Activated CD4-positive, alpha-beta T cell treated with anti-CD3 and anti-CD28 coated beads for 36 hours (primary cell): ENCODE measurements at regions of chr10 and their contacts with region 1.

Region 1: DNA sequence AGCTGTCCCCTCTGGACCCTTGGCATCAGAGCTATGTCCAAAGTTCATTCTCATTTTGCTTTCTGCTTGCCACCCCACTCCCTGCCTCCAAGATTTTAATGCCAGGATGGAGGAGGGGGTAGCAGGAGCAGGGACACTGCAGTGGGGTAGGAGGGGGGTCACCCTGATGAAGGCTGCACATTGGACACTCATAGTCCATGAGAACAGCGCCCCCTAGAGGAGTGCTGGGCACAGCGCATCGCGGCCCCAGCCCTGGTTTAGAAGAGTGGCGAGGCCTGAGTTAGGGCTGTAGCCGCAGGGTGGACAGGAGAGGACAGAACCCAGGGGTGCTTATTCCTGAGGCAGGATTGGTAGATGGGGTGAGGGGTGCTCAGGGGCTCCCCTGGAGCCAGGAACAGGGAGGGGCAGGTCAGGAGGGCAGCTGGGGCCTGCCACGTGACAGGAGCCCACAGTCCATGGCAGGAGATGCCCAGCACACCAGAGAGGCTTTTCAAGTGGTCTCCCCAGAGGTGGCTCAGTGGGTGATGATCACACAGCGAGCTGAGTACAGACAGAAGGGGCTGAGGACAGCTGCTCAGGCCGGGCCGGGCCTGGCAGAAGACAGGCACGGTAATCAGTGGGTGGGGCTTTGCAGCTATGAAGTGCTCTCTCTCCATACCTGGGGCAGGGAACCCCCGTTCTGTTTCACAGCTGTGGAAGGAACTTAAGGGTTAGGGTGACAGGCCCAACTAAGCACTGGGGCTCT is 71.4 kb downstream of the NEURL1 start:
- DNase-seq: peak; percentile 79
- ATAC-seq: peak; percentile 88
- H3K4me3 Mint-ChIP-seq: no peak overlapping the region
- H3K27ac Mint-ChIP-seq: no peak overlapping the region
- H3K4me1 Mint-ChIP-seq: no peaks in the 10 kb centered on the region
- H3K27me3 Mint-ChIP-seq: peaks cover 2% of the 10 kb centered on the region

Region 2: DNA sequence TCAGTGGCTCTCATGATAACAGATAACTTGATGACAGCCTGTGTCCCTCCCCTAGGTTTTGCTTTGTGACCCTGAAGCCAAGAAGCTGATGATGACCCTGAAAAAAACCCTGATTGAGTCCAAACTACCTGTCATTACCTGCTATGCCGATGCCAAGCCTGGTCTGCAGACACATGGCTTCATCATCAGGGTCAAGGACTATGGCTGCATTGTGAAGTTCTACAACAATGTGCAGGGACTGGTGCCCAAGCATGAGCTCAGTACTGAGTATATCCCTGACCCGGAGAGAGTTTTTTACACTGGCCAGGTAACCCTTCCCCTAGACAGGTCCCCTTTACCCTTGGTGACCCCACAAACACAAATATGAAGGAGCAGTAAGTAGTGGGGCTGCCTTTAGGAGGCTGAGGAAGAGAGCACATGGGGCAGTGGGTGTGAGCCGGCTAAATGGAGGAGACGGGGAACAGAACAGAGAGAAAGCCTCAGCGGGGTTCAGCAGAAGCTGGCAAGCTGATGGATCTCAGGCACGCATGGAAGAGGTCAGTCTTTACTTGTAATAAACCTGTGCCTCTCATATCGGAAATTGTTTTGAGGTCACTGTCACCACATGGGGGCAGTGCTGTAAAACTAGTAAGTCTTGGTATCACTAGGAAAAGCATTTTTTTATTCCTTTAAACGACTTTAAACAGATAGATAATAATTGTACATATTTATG is 148.4 kb before region 1 on chr10:
- CTCF ChIA-PET with region 1: interaction called, 3 read pairs
- POLR2A ChIA-PET with region 1: no interaction called
- intact Hi-C with region 1: loop called in 1 of 2 experiments (anchors 5 kb)
- DNase-seq: peak; percentile 70
- ATAC-seq: peak; percentile 55
- H3K4me3 Mint-ChIP-seq: no peak overlapping the region
- H3K27ac Mint-ChIP-seq: no peak overlapping the region
- H3K4me1 Mint-ChIP-seq: no peaks in the 10 kb centered on the region
- H3K27me3 Mint-ChIP-seq: no peaks in the 10 kb centered on the region

Region 3: GRCh38 chr10:103547391-103547946 is 17.5 kb before region 1 on chr10:
- CTCF ChIA-PET with region 1: interaction called, 18 read pairs
- POLR2A ChIA-PET with region 1: no interaction called
- intact Hi-C with region 1: no loop called
- DNase-seq: no peak
- ATAC-seq: no peak
- H3K4me3 Mint-ChIP-seq: no peak overlapping the region
- H3K27ac Mint-ChIP-seq: no peak overlapping the region
- H3K4me1 Mint-ChIP-seq: peaks cover 9% of the 10 kb centered on the region
- H3K27me3 Mint-ChIP-seq: peaks cover 3% of the 10 kb centered on the region

Region 4: DNA sequence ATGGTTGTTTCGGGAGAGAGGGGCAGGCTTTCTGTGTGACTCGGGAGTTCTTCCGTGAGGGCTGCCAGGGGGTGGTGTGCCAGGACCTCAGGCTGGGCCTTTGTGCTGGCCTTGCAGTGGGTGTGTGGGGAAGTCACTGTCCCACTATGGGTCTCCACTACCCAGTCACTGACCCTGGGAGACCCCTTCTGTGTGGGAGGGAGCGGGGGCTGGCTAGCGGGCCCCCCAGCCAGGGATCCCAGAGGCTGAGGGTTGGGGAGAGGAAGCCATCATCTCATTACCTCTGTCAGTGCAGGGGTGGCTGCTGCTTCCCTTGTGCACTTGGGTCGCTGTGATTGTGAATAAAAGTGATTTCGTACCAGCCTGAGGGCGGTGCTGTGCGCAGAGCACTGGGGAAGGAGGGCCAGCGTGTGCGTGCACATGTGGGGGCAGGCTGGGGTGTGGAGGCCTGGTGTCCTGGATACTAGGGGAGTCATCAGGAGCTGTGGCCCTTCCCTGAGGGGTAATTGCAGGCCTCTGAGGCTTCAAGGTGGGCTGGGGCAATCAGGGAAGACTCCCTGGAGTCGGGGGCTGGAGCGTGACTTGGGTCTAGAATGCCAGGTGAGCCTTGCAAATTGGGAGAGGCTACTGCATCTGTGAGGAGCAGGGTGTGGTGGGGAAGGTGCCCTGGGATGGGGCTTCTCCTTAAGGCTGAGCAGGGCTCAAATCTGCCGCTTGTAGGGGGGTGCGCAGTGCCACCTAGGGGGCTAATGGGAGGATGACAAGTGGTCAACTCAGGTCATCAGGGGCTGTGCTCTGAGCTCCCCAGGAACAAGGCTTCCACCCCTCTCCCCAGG is 27.5 kb after region 1 on chr10:
- CTCF ChIA-PET with region 1: interaction called, 3 read pairs
- POLR2A ChIA-PET with region 1: interaction called, 13 read pairs
- intact Hi-C with region 1: no loop called
- DNase-seq: peak; percentile 72
- ATAC-seq: peak; percentile 90
- H3K4me3 Mint-ChIP-seq: no peak overlapping the region
- H3K27ac Mint-ChIP-seq: no peak overlapping the region
- H3K4me1 Mint-ChIP-seq: peaks cover 3% of the 10 kb centered on the region
- H3K27me3 Mint-ChIP-seq: no peaks in the 10 kb centered on the region

Region 5: DNA sequence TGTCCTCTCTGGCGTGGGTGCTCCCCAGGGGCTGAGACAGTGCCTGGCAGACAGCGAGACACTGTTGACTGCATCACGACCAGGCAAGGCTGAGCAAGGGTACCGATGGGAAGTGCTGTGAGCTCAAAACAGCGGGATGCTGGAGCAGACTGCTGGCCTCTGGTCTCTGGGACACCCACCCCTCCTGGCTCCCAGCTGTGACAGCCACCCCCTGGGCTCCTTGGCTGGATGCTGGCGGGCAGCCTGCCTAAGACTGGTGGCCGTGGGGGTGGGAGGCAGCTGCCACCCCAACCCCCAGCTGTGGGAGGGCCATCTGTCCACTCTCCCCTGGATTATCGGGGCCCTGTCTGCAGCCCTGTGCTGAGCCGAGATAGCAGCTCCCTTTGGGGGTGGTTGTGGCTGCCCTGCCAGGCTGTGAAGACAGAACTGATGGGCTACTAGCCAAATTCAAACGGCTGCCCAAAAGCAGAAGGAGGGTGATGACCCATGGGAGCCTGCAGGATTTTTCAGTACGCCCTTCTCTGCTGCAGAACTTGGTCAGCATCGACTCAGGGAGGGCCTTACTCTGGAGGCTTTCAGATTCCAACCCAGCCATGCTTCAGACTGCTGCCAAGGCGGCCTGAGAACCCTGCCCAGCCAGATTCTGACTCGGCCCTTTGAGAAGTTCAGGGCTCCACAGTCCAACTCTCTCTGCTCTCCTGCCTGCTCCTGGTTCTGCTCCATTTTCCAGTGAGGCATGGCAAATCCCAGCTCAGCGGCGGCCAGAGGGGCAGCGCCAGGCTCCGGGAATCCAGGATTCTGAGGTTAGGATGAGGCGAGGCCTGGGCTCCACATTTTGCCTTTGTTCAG is 53.9 kb after region 1 on chr10:
- CTCF ChIA-PET with region 1: no interaction called
- POLR2A ChIA-PET with region 1: no interaction called
- intact Hi-C with region 1: loop called in 1 of 2 experiments (anchors 5 kb)
- DNase-seq: no peak
- ATAC-seq: no peak
- H3K4me3 Mint-ChIP-seq: no peak overlapping the region
- H3K27ac Mint-ChIP-seq: no peak overlapping the region
- H3K4me1 Mint-ChIP-seq: no peaks in the 10 kb centered on the region
- H3K27me3 Mint-ChIP-seq: no peaks in the 10 kb centered on the region

Region 6: DNA sequence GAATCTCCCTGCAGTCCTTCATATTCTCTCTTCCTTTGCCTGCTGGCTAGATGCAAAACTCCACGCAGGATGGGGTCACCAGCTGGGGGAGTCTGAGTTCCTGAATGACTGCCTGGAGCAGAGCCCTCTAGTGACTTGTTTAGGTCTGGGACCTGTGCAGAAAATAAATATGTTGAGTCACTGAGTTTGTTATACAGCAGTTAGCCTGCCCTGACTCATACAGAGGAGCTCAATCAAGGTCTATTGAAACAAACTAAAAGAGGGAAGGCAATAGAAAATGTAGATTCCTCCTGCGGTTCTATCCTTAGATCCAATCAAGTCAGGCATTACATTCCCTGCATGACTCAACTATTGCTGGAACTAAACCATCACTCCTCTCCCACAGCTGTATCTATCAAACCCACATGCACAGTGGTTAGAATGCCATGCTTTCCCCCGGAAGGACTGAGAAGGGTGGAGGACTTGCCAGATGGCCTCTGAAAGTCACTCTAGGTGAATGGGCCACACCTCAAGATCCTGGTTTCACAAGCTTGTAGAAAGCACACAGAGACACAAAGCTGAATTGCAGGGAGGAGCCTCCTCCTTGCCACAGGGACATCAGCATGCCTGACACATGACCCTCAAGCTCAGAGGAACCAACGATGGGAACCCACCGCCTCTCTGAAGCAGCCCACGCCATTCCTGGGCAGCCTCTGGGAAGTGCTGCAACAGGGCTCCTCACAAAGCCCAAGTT is 216.5 kb after region 1 on chr10:
- CTCF ChIA-PET with region 1: no interaction called
- POLR2A ChIA-PET with region 1: no interaction called
- intact Hi-C with region 1: no loop called
- DNase-seq: peak; percentile 33
- ATAC-seq: peak; percentile 90
- H3K4me3 Mint-ChIP-seq: no peak overlapping the region
- H3K27ac Mint-ChIP-seq: no peak overlapping the region
- H3K4me1 Mint-ChIP-seq: peaks cover 3% of the 10 kb centered on the region
- H3K27me3 Mint-ChIP-seq: peaks cover 11% of the 10 kb centered on the region